Ascending aorta (tissue), 2 donors: ENCODE measurements at regions of chr11 and their contacts with region 1.

Region 1: GRCh38 chr11:73184953-73185671 is 33.0 kb upstream of the P2RY2 start:
- DNase-seq: peak in 1 of 2 donors; percentile 83
- H3K4me3 ChIP-seq: peak overlapping the region in 1 of 2 donors; percentile 11
- H3K27ac ChIP-seq: peak overlapping the region; percentile 69 to 77
- H3K4me1 ChIP-seq: peaks cover 16 to 18% of the 10 kb centered on the region in 2 donors
- H3K27me3 ChIP-seq: no peaks in the 10 kb centered on the region
- CTCF ChIP-seq: peak; percentile 82 to 84 (median 84)

Region 2: GRCh38 chr11:73198677-73199076 is 13.6 kb after region 1 on chr11:
- intact Hi-C with region 1: no loop called
- DNase-seq: peak in 1 of 2 donors; percentile 15
- H3K4me3 ChIP-seq: no peak overlapping the region
- H3K27ac ChIP-seq: no peak overlapping the region
- H3K4me1 ChIP-seq: no peaks in the 10 kb centered on the region
- H3K27me3 ChIP-seq: no peaks in the 10 kb centered on the region
- CTCF ChIP-seq: no peak

Region 3: DNA sequence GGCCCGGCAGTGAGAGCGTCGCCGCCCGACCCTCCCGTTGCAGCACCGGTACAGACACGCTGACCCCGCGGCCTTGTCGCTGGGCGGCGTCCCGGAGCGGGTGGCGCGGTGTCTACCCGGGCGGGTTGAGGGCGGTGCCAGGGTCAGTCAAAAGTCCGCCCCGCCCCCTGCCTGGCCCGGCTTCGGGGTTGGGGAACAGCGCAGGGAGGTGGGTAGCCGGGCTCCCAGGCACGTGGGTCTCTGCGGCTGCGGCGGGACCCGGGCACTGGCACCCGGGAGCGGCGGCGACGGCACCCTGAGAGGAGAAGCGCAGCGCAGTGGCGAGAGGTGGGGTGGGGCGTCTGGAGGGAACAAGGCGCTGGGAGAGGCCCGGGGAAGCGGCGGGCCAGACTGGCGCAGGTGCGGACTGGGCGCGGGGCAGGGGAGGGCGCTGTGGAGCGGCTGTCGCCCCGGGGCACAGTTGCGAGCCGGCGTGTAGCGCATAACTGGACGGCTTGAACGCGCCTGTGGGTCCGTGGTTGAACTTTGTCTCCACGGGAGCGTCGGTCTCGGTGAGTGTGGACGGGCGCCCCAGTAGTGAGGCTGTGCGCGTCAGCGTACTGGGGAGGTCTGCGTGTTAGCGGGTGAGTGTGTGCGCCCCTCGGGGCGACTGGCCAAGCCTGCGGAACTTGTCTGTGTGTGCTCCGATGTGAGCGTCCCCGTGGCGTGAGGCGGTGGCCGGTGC is 33.2 kb after region 1 on chr11 and contains the start of gene P2RY2:
- intact Hi-C with region 1: loop called (anchors 2 kb)
- DNase-seq: peak; percentile 22 to 86
- H3K4me3 ChIP-seq: peak within 1 kb of the TSS; percentile 52 to 71
- H3K27ac ChIP-seq: peak within 1 kb of the TSS in 1 of 2 donors; percentile 11
- H3K4me1 ChIP-seq: peaks cover 2 to 3% of the 10 kb centered on the region in 2 donors
- H3K27me3 ChIP-seq: no peaks in the 10 kb centered on the region
- CTCF ChIP-seq: peak; percentile 66 to 74 (median 69)
- total RNA-seq, gene P2RY2: 18.3 TPM

Region 4: DNA sequence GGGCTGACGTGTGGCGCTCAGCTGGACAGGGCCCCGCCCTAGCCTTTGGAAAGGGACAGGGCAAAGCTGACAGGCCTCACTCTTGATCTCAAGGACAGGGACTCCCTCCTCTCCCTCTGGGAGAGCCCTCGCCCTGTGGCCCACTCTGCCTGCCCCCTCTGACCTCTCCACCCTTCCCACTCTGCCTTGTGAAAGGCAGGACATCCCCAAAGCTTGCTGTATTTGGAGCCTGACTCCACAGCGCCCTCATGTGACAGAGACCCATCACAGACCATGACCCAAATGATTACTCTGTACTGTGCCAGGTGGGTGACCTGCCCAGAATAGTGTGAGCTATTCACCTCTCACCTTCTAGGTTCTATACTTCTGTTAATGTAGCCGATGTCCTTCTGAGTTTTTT is 51.7 kb after region 1 on chr11:
- intact Hi-C with region 1: loop called (anchors 1 kb)
- DNase-seq: no peak
- H3K4me3 ChIP-seq: no peak overlapping the region
- H3K27ac ChIP-seq: peak overlapping the region; percentile 67 to 76
- H3K4me1 ChIP-seq: peaks cover 5 to 18% of the 10 kb centered on the region in 2 donors
- H3K27me3 ChIP-seq: no peaks in the 10 kb centered on the region
- CTCF ChIP-seq: peak; percentile 23 to 56 (median 41)